RWPE1 (cell line): ENCODE measurements at regions of chr14 and their contacts with region 1.

Region 1: GRCh38 chr14:73305499-73305898 is 68.2 kb downstream of the PAPLN start:
- DNase-seq: no peak
- H3K27ac ChIP-seq: no peak overlapping the region
- CTCF ChIP-seq: no peak

Region 2: DNA sequence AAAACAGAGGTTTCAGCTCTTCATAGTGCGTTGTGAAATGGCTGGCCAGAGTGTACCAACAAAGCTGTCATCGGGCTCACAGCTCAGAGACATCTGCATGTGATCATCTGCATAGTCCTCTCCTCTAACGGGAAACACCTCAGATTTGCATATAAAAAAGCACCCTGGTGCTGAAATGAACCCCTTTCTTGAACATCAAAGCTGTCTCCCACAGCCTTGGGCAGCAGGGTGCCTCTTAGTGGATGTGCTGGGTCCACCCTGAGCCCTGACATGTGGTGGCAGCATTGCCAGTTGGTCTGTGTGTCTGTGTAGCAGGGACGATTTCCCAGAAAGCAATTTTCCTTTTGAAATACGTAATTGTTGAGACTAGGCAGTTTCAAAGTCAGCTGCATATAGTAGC is 82.5 kb before region 1 on chr14:
- CTCF ChIA-PET with region 1: no interaction called
- POLR2A ChIA-PET with region 1: no interaction called
- DNase-seq: no peak
- H3K27ac ChIP-seq: no peak overlapping the region
- CTCF ChIP-seq: no peak

Region 3: DNA sequence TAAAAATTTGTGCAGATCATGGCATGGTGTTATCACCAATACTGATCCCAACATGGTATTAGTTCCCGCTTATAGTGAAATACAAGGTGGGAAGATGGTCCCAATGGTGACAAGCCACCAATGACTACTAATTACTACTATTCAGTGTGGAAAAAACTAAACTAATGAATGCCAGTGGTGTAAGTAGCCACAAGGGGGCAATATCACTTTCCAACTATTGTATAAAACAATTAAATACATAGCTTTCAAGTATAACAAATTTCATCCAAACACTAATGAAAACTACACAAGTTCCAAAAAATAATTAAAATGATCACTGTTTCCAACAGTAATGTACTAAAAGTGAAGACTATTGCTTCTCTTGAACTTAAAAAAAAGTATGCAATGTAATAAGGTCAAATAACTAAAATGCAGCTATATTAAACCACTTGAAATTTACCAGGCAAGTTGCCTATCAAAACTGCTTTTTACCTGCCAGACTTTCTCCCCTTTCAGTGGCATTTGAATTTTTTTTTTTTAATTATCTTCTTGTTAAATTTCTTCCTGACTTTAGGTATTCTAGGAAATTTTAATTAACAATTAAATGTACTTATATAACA is 10.2 kb before region 1 on chr14:
- CTCF ChIA-PET with region 1: interaction called, 10 read pairs
- POLR2A ChIA-PET with region 1: no interaction called
- DNase-seq: peak; percentile 41
- H3K27ac ChIP-seq: no peak overlapping the region
- CTCF ChIP-seq: peak; percentile 77